ENCODE measurements at regions of chr1 and their contacts with region 1.

Region 1: DNA sequence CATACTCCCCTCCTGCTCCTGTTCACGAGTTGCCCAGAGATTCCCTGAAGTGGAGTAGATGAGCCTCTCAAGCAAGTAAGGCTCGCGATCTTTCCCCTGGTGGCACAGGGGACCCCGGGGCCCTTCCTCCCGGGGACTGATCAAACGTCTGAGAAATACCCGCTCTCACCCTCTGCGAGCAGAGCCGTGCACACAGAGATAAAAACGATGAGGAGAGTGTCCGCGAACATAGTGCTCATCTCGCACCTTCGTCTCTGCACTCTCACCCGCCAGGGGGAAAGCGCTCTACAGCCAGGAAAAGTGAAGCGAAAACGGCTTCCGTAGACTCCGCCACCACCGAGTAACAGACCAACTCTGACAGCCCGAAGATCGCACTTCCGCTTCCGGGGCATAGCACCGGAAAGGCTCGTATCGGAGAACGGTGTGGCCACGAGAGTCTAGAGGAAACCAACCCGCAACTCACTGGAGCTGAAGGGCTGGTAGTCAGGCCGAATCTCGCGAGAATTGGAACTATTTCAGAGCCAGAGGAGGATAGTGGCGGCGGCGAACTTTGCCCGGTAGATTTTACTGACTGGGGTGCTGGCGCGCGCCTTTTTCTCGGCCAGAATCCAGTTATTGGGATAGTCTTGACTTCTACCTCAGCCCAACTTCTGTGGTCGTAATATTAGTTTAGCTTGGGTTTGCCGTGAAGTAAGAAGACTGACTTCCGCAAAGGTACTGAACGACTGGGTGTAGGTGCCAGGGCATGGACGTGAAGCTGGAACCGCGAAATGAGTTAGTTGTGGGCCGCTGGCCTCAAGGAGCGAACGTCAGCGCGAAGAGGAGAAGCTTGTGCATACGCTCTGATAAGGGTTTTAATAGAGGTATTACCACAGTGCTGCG is at the start of gene TMCO1:
- DNase-seq: peak; percentile 97
- ATAC-seq: peak; percentile 95
- H3K4me3 ChIP-seq: peak within 1 kb of the TSS; percentile 73 to 92 (median 85)
- H3K4me3 Mint-ChIP-seq: peak within 1 kb of the TSS; percentile 98
- H3K27ac ChIP-seq: peak within 1 kb of the TSS; percentile 91 to 94
- H3K27ac Mint-ChIP-seq: peak within 1 kb of the TSS; percentile 97
- H3K4me1 ChIP-seq: peaks cover 20 to 23% of the 10 kb centered on the region in 2 donors
- H3K4me1 Mint-ChIP-seq: peaks cover 52% of the 10 kb centered on the region
- H3K27me3 ChIP-seq: no peaks in the 10 kb centered on the region
- H3K27me3 Mint-ChIP-seq: no peaks in the 10 kb centered on the region
- CTCF ChIP-seq: peak; percentile 23
- total RNA-seq, gene TMCO1: 34.8 and 39.5 TPM in 2 replicates

Region 2: GRCh38 chr1:165543532-165544495 is 224.9 kb before region 1 on chr1 and contains the start of gene LRRC52:
- CTCF ChIA-PET with region 1: no interaction called
- POLR2A ChIA-PET with region 1: no interaction called
- intact Hi-C with region 1: no loop called
- DNase-seq: no peak
- ATAC-seq: no peak
- H3K4me3 ChIP-seq: no peak within 1 kb of the TSS
- H3K4me3 Mint-ChIP-seq: no peak within 1 kb of the TSS
- H3K27ac ChIP-seq: no peak within 1 kb of the TSS
- H3K27ac Mint-ChIP-seq: no peak within 1 kb of the TSS
- H3K4me1 ChIP-seq: no peaks in the 10 kb centered on the region
- H3K4me1 Mint-ChIP-seq: no peaks in the 10 kb centered on the region
- H3K27me3 ChIP-seq: peaks cover 0 to 15% (median 4%) of the 10 kb centered on the region in 4 experiments
- H3K27me3 Mint-ChIP-seq: peaks cover 49% of the 10 kb centered on the region
- CTCF ChIP-seq: no peak
- total RNA-seq, gene LRRC52: not detected in 2 replicates

Region 3: DNA sequence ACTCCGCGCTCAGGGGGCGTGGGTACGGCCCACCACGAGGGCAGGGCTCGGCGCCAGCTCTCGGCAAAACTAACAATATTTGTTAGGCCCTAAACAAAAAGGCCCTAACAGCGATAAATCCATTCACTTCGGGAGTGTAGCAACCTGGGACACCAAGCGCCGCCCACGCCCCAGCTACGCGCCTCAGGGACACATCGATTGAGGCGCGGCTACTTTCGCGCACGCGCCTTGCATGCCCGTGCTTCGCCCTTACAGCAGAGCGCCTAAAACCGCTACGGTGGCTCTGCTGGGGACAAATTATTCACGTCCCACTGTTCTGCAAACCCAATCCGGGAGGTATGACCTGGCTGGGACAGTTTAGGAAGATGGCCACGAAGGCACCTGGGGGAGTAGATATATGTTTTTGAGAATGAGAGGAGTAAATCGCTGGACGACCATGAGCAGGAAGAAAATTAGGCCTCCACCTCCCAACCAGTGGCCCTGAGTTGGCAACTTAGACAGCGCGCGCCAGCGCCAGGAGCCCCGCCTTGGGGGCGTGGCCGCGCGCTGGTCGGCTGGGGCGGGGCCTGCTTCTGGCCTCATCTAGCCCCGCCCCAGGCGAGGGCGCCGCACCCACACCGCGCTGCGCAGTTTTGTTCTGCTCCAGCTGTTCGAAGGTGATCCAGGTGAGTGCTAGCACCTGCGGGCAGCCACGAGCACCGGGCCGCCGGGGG is 138.0 kb before region 1 on chr1 and contains the start of gene MGST3:
- CTCF ChIA-PET with region 1: no interaction called
- POLR2A ChIA-PET with region 1: interaction called, 7 read pairs
- intact Hi-C with region 1: loop called (anchors 1 kb)
- DNase-seq: peak; percentile 95
- ATAC-seq: peak; percentile 94
- H3K4me3 ChIP-seq: peak within 1 kb of the TSS; percentile 74 to 93 (median 84)
- H3K4me3 Mint-ChIP-seq: no peak within 1 kb of the TSS
- H3K27ac ChIP-seq: peak within 1 kb of the TSS; percentile 72 to 83
- H3K27ac Mint-ChIP-seq: peak within 1 kb of the TSS; percentile 67
- H3K4me1 ChIP-seq: peaks cover 27 to 31% of the 10 kb centered on the region in 2 donors
- H3K4me1 Mint-ChIP-seq: peaks cover 31% of the 10 kb centered on the region
- H3K27me3 ChIP-seq: no peaks in the 10 kb centered on the region
- H3K27me3 Mint-ChIP-seq: no peaks in the 10 kb centered on the region
- CTCF ChIP-seq: no peak
- total RNA-seq, gene MGST3: 41.7 and 46.0 TPM in 2 replicates

Region 4: GRCh38 chr1:165697881-165698760 is 70.6 kb before region 1 on chr1 and contains the start of gene ALDH9A1:
- CTCF ChIA-PET with region 1: interaction called, 8 read pairs
- POLR2A ChIA-PET with region 1: interaction called, 3 read pairs
- intact Hi-C with region 1: loop called (anchors 1 kb)
- DNase-seq: peak; percentile 89
- ATAC-seq: peak; percentile 89
- H3K4me3 ChIP-seq: peak within 1 kb of the TSS; percentile 73 to 96 (median 95)
- H3K4me3 Mint-ChIP-seq: peak within 1 kb of the TSS; percentile 92
- H3K27ac ChIP-seq: peak within 1 kb of the TSS; percentile 90 to 92
- H3K27ac Mint-ChIP-seq: peak within 1 kb of the TSS; percentile 91
- H3K4me1 ChIP-seq: peaks cover 15 to 18% of the 10 kb centered on the region in 2 donors
- H3K4me1 Mint-ChIP-seq: peaks cover 25% of the 10 kb centered on the region
- H3K27me3 ChIP-seq: peaks cover 0 to 4% (median 0%) of the 10 kb centered on the region in 4 experiments
- H3K27me3 Mint-ChIP-seq: peaks cover 3% of the 10 kb centered on the region
- CTCF ChIP-seq: peak; percentile 24
- total RNA-seq, gene ALDH9A1: 37.5 and 37.9 TPM in 2 replicates

Region 5: DNA sequence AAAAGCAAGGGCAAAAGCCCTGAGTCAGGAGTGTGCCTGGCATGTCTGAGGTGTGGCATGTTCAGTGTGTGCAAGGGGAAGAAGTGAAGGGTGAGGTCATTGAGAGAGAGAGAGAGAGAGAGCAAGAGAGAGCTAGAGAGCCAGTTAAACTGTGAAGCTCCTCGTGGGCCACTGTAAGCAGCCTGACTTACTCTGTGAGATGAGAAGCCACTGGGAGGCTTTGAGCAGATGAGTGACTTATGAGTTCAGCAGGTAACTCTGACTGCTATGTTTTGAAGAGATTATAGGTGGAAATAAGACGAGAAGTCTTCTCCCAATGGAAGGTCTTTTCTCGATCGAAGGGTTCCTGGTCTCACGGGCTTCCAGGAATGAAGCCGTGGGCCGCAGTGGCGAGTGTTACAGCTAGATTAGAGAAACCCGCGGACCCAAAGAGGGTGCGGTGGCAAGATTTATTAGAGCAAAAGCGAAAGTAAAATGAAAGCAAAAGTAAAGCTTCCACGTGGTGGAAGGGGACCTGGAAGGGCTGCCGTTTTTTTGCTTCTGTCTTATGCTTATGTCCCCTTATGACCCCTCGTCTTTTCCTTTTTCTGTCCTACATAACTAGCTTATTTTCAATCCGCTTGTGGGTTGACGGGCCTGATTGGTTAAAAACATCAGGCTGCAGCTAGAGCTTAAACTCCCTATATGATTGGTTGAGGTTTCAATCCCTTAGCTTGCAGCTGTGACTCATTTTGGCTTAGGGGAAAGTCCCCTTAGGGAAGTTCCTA is 721.1 kb after region 1 on chr1:
- CTCF ChIA-PET with region 1: no interaction called
- POLR2A ChIA-PET with region 1: no interaction called
- intact Hi-C with region 1: loop called (anchors 5 kb)
- DNase-seq: peak; percentile 76
- ATAC-seq: peak; percentile 81
- H3K4me3 ChIP-seq: peak overlapping the region; percentile 57 to 96 (median 83)
- H3K4me3 Mint-ChIP-seq: no peak overlapping the region
- H3K27ac ChIP-seq: peak overlapping the region; percentile 90 to 95
- H3K27ac Mint-ChIP-seq: no peak overlapping the region
- H3K4me1 ChIP-seq: peaks cover 14 to 19% of the 10 kb centered on the region in 2 donors
- H3K4me1 Mint-ChIP-seq: peaks cover 5% of the 10 kb centered on the region
- H3K27me3 ChIP-seq: no peaks in the 10 kb centered on the region
- H3K27me3 Mint-ChIP-seq: no peaks in the 10 kb centered on the region
- CTCF ChIP-seq: no peak